Activated CD4-positive, alpha-beta T cell treated with anti-CD3 and anti-CD28 coated beads for 36 hours (primary cell): ENCODE measurements at regions of chr2 and their contacts with region 1.

Region 1: DNA sequence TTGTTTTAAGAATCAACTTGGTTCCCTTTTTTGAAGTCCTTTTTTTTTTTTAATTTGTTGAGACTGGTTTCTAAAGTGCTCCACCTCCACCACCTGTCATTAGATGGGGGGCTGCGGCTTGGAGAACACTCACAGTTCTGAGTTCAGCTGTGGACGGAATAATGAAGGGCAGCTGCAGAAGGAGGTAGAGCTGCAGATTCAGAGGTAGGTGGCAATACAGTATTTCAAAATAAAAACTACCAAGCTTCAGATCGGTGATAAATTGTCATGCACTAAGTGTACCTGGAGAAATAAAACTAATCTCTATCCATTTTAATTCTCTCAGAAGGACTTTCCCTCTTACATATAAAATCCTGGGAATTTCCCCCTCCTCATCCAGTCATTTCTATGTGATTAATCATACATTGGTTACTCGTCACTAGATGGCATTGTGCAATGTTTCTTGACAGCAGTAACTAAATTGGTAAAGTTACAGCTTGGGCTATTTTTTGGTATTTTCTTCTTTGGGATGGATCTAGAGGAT is 81.1 kb upstream of the SLC39A10 start:
- DNase-seq: no peak
- ATAC-seq: peak; percentile 75
- H3K4me3 Mint-ChIP-seq: peak overlapping the region; percentile 33
- H3K27ac Mint-ChIP-seq: peak overlapping the region; percentile 67
- H3K4me1 Mint-ChIP-seq: peaks cover 71% of the 10 kb centered on the region
- H3K27me3 Mint-ChIP-seq: no peaks in the 10 kb centered on the region

Region 2: GRCh38 chr2:195151711-195152110 is 424.2 kb before region 1 on chr2:
- CTCF ChIA-PET with region 1: no interaction called
- POLR2A ChIA-PET with region 1: no interaction called
- intact Hi-C with region 1: no loop called
- DNase-seq: no peak
- ATAC-seq: no peak
- H3K4me3 Mint-ChIP-seq: no peak overlapping the region
- H3K27ac Mint-ChIP-seq: no peak overlapping the region
- H3K4me1 Mint-ChIP-seq: no peaks in the 10 kb centered on the region
- H3K27me3 Mint-ChIP-seq: peaks cover 2% of the 10 kb centered on the region

Region 3: GRCh38 chr2:195368249-195369217 is 207.4 kb before region 1 on chr2:
- CTCF ChIA-PET with region 1: no interaction called
- POLR2A ChIA-PET with region 1: no interaction called
- intact Hi-C with region 1: no loop called
- DNase-seq: no peak
- ATAC-seq: no peak
- H3K4me3 Mint-ChIP-seq: no peak overlapping the region
- H3K27ac Mint-ChIP-seq: no peak overlapping the region
- H3K4me1 Mint-ChIP-seq: peaks cover 17% of the 10 kb centered on the region
- H3K27me3 Mint-ChIP-seq: no peaks in the 10 kb centered on the region

Region 4: DNA sequence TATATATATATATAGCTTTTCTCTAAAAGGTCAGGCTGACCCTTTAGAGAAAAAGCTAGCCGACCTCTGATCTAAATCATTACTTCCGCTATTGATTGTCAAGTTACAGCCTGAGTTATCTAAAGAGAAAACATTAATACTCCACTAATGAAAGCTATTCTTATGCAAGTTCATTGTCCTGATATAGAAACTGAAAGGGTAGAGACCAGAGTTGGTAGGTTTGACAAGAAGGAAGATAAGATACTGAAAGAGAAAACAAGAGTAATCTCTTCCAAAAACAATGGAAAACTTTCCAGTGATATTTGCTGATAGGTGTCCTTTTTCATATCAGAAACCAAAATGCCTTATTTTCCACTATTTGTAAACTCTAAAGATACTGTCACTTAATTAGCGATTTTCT is 18.3 kb after region 1 on chr2:
- CTCF ChIA-PET with region 1: interaction called, 16 read pairs
- POLR2A ChIA-PET with region 1: no interaction called
- intact Hi-C with region 1: no loop called
- DNase-seq: no peak
- ATAC-seq: no peak
- H3K4me3 Mint-ChIP-seq: no peak overlapping the region
- H3K27ac Mint-ChIP-seq: no peak overlapping the region
- H3K4me1 Mint-ChIP-seq: peaks cover 8% of the 10 kb centered on the region
- H3K27me3 Mint-ChIP-seq: no peaks in the 10 kb centered on the region